ENCODE measurements at regions of chr19 and their contacts with region 1.

Region 1: DNA sequence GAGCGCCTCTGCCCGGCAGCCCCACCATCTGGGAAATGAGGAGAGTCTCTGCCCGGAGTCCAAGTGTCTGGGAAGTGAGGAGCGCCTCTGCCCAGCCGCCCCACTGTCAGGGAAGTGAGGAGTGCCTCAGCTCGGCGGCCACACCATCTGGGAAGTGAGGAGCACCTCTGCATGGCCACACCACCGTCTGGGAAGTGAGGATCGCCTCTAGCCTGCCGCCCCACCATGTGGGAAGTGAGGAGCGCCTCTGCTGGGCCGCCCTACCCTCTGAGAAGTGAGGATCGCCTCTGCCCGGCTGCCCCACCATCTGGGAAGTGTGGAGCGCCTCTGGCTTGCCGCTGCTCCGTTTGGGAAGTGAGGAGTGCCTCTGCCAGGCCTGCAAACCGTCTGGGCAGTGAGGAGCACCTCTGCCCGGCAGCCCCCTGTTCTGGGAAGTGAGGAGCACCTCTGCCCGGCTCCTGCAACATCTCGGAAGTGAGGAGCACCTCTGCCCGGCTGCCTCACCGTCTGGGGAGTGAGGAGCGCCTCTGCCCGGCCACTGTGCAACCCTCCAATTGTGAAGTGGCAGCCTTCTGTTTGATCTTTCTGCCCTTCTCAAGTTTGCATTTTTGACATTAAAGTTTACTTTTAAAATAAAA is 60.8 kb upstream of the CEACAM21 start:
- DNase-seq: no peak
- ATAC-seq: no peak
- H3K4me3 ChIP-seq: no peak overlapping the region
- H3K4me3 Mint-ChIP-seq: no peak overlapping the region
- H3K27ac ChIP-seq: no peak overlapping the region
- H3K27ac Mint-ChIP-seq: no peak overlapping the region
- H3K4me1 ChIP-seq: peaks cover 5% of the 10 kb centered on the region
- H3K4me1 Mint-ChIP-seq: peaks cover 9% of the 10 kb centered on the region
- H3K27me3 ChIP-seq: peaks cover 6 to 10% of the 10 kb centered on the region in 2 experiments
- H3K27me3 Mint-ChIP-seq: peaks cover 81% of the 10 kb centered on the region
- CTCF ChIP-seq: no peak

Region 2: DNA sequence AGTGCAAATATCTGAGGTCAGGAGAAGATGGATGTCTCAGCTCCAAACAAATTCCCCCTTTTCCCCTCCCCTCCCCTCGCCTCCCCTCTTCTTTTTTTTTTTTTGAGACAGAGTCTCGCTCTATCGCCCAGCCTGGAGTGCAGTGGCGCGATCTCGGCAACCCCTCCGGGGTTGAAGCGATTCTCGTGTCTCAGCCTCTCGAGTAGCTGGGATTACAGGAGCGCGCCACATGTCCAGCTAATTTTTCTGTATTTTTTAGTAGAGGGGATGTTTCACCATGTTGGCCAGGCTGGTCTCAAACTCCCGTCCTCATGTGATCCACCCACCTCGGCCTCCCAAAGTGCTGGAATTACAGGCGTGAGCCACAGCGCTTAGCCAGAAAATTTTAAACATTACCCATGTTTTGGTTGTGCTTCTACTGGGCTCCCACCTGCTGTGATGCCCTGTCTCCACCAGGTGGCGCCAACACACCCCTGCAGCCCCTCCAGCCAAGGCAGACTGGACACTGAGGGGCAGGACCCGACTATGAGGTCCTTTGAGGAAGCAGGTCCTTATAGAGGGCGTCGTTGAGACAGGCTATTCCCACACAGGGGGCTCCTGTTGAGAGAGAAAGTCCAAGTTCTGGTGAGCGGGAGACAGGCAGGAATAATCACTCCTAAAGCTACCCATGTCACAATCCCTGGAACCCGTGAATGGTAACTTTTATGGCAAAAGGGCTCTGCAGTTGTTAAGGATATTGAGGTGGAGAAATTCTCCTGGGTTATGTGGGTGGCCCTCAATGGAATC is 65.9 kb before region 1 on chr19:
- CTCF ChIA-PET with region 1: no interaction called
- POLR2A ChIA-PET with region 1: no interaction called
- intact Hi-C with region 1: loop called in 1 of 2 experiments (anchors 5 kb)
- DNase-seq: peak; percentile 45 to 83 (median 62)
- ATAC-seq: peak; percentile 93
- H3K4me3 ChIP-seq: peak overlapping the region; percentile 32
- H3K4me3 Mint-ChIP-seq: peak overlapping the region; percentile 73
- H3K27ac ChIP-seq: no peak overlapping the region
- H3K27ac Mint-ChIP-seq: no peak overlapping the region
- H3K4me1 ChIP-seq: peaks cover 20% of the 10 kb centered on the region
- H3K4me1 Mint-ChIP-seq: no peaks in the 10 kb centered on the region
- H3K27me3 ChIP-seq: peaks cover 4 to 8% of the 10 kb centered on the region in 2 experiments
- H3K27me3 Mint-ChIP-seq: peaks cover 23% of the 10 kb centered on the region
- CTCF ChIP-seq: peak; percentile 98